ENCODE measurements at regions of chr5 and their contacts with region 1.

Region 1: DNA sequence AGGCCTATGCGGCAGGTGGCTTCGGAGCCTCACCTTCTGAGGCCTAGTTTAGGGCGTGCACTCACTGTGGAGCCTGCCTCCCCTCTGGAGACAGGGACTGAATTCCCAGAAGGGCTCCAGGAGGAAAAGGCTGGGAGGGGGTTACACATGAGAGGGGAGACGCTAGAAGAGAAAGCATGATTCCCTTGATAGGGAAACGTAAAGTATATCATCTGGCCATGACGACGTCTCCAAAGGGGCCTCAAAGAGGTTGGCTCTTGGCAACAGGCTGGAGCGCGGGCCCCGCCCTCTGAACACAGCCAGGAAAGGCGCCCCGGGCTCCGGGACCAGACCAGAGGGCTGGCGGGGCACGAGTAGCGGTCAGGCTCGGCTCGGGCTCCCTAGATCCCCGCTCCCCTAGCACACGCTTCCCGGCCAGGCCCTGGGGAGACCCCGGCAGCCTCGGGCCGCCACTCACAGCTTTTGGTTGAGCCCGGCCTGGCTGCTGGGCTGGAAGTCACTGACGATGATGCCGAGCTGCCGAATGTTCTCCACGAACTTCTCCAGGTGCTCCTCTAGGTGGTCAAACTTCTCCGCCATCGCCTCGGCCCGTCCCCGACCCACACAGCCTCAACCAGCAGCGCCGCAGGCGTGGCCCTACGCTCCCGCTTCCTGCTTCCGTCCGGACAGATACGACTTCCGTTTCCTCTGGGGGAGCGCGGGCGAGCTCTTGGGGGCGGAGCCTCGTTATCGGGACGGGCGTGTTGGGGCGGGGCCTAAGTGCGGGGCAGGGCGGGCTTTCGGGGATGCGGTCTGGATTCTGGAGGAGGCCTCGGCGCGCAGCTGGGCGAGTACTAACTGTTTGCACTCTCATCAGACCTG is at the start of gene MED10:
- DNase-seq: peak; percentile 79 to 97
- H3K4me3 ChIP-seq: peak within 1 kb of the TSS; percentile 80 to 86
- H3K27ac ChIP-seq: peak within 1 kb of the TSS; percentile 84 to 95
- H3K4me1 ChIP-seq: peaks cover 4 to 12% of the 10 kb centered on the region in 2 donors
- H3K27me3 ChIP-seq: no peaks in the 10 kb centered on the region
- CTCF ChIP-seq: no peak
- total RNA-seq, gene MED10: 2.9 TPM

Region 2: DNA sequence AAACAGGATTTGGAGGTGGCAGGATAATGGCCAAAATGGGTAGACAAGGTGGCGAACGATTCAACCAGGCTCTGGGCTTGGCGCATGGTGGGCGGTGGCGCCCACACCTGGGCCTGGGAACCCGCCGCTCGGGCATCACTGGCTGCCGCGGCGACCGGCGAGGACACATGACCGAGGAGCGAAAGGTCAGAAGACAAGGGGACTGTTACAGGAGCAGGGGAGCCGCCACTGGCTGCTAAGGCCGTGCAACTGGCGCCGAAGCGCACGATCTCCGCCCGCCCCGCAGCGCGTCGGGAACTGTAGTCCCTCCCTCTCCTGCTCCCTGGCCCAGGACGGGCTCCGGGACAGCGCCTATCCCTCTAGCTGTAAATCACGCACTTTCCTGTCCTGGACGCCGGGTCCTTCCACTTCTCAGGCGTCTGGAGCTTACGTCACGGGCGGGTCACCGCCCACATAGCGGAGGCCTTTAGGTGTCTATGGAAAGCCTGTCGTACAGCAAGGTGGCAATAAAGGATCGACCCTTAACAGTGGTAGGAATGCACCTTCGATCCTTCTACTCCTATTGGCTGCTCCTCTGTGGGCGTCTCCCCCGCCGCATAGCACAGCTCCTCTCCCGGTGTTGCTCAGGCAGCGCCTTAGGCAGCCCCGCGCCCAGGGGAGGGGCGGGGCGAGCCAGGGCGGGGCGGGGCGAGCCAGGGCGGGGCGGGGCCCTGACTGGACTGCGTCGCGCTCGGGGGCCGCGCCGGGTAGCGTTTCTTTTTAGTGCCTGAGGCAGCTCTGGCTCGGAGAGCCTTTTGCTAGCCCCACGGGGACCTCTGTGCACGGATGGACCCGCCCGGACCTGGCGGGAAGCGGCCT is 955.9 kb before region 1 on chr5 and contains the start of gene ICE1:
- intact Hi-C with region 1: loop called (anchors 2 kb)
- DNase-seq: peak; percentile 95 to 99
- H3K4me3 ChIP-seq: peak within 1 kb of the TSS; percentile 84 to 99
- H3K27ac ChIP-seq: peak within 1 kb of the TSS; percentile 94 to 95
- H3K4me1 ChIP-seq: peaks cover 15 to 27% of the 10 kb centered on the region in 2 donors
- H3K27me3 ChIP-seq: no peaks in the 10 kb centered on the region
- CTCF ChIP-seq: no peak
- total RNA-seq, gene ICE1: 13.5 TPM

Region 3: DNA sequence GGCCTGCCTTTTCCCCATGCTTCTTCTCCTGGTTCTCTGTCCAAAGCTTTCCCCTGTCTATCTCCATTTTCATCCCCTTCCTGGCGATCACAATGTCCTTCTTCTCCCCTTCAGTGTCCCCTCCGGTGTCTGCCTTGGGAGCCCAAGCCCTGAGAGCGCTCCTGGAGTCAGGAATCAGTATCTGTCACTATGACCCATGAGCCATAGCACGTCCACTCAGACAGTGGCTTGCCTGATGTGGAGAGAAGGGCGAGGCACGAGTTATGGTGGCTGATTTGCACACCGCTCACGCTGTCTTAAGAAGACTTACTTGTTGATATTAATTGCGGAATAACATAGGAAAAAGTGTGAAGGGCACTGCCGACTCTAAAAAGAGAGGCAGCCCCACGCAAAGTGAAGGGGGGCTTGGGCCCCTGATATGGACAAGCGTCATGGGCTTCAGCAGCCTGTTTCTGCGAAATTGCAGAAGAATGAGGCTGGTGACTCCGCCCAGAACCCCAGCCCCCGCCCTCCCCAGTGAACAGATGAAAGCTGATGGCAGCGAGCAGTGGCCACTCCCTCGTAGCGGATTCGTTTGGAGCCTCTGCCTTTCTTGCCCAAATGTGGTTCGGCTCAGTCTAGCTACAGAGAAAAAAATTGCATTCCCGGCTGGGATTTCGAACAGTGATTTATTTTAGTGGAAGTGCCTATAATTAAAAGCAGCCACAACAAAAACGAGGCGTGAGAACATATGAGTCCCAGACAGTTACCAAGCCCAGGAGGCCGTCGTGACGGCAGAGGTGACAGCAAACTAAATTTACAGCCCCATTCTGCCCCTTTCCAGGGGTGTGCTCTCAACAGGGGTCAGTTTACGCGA is 805.9 kb before region 1 on chr5:
- intact Hi-C with region 1: loop called (anchors 10 kb)
- DNase-seq: peak; percentile 51 to 91
- H3K4me3 ChIP-seq: peak overlapping the region; percentile 1 to 49
- H3K27ac ChIP-seq: peak overlapping the region; percentile 81 to 84
- H3K4me1 ChIP-seq: peaks cover 8 to 24% of the 10 kb centered on the region in 2 donors
- H3K27me3 ChIP-seq: no peaks in the 10 kb centered on the region
- CTCF ChIP-seq: no peak

Region 4: DNA sequence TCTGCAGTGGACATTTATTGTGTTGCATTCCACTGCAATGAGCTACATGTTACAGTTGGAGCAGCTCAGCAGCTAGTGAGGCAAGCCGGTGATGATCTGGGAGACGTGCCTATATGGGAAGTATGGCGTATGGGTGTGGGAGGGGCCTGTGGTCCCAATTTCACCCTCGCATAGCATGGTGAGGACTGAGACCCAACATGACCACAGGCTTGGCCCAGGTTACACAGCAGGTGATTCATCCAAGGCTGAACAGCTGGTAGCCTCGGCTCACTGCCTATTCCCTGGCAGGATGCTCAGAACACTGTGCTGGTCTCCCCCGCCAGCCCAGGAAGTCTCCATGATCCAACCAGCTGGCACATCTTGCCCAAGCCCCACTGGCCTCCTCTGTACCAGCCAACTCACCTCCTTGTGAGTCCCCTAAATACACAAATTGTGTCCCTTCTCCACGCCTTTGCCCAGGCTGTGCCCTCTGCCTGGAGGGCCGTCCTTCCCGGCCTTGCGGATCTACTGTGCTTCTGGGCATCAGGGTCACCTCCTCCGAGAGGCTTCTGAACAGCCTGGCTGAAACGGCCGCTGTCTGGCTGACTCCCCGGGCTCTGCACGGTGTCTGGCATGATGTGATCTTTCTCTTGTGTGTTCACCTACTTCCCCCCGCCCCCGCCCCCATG is 173.3 kb after region 1 on chr5:
- intact Hi-C with region 1: loop called (anchors 1 kb)
- DNase-seq: peak; percentile 81 to 85
- H3K4me3 ChIP-seq: peak overlapping the region in 1 of 2 donors; percentile 2
- H3K27ac ChIP-seq: peak overlapping the region; percentile 64 to 73
- H3K4me1 ChIP-seq: peaks cover 0 to 15% of the 10 kb centered on the region in 2 donors
- H3K27me3 ChIP-seq: no peaks in the 10 kb centered on the region
- CTCF ChIP-seq: no peak

Region 5: GRCh38 chr5:6632917-6633468 is 254.9 kb after region 1 on chr5 and contains the starts of genes NSUN2 and SRD5A1:
- intact Hi-C with region 1: loop called (anchors 1 kb)
- DNase-seq: peak; percentile 56 to 95
- H3K4me3 ChIP-seq: peak within 1 kb of the TSS; percentile 74 to 87
- H3K27ac ChIP-seq: peak within 1 kb of the TSS; percentile 83 to 97
- H3K4me1 ChIP-seq: peaks cover 0 to 14% of the 10 kb centered on the region in 2 donors
- H3K27me3 ChIP-seq: no peaks in the 10 kb centered on the region
- CTCF ChIP-seq: no peak
- total RNA-seq, gene NSUN2: 19.1 TPM
- total RNA-seq, gene SRD5A1: 186 TPM

Measured in ascending aorta (tissue), 2 donors.